ENCODE measurements at regions of chr10 and their contacts with region 1.

Region 1: DNA sequence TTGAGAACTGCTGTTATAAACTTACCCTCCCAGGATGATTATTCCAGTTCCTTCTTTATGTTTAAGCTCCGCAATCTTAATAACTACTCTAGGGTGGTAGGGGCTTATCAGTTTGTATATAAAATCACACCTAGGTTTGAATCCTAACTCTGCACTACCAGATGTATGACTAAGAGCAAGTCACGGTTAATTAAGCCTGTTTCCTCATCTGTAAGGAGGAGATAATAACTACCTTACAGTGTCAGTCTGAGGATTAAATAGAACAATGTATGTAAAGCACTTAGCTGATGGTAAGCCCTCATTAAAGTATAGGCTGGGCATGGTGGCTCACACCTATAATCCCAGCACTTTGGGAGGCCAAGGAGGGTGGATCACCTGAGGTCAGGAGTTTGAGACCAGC is 9.2 kb downstream of the DNA2 start:
- DNase-seq: no peak
- ATAC-seq: no peak
- H3K4me3 ChIP-seq: no peak overlapping the region
- H3K27ac ChIP-seq: no peak overlapping the region
- H3K4me1 ChIP-seq: no peaks in the 10 kb centered on the region
- H3K27me3 ChIP-seq: no peaks in the 10 kb centered on the region
- CTCF ChIP-seq: no peak

Region 2: DNA sequence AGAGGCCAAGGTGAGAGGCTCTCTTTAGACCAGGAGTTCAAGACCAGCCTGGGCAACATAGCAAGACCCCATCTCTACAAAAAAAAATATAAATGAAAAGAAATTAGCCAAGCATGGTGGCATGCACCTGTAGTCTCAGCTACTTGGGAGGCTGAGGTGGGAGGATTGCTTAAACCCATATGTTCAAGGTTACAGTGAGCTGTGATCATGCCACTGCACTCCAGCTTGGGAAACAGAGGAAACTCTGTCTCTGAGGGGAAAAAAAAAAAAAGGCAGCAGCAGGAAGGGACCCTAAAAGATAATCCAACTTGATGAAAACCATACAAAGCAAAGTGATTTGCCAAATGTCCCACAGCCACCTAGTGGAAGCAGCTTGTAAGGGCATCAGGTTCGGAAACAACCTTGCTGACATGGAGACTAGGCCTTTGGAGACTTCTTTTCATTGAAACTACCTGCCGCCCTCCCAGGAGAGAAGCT is 114.2 kb before region 1 on chr10:
- CTCF ChIA-PET with region 1: no interaction called
- POLR2A ChIA-PET with region 1: no interaction called
- in situ Hi-C with region 1: no loop called
- intact Hi-C with region 1: no loop called
- DNase-seq: peak; percentile 58
- ATAC-seq: peak; percentile 70
- H3K4me3 ChIP-seq: no peak overlapping the region
- H3K27ac ChIP-seq: no peak overlapping the region
- H3K4me1 ChIP-seq: no peaks in the 10 kb centered on the region; the same call in 1 of the 2 replicates
- H3K27me3 ChIP-seq: no peaks in the 10 kb centered on the region
- CTCF ChIP-seq: peak; percentile 95

Region 3: DNA sequence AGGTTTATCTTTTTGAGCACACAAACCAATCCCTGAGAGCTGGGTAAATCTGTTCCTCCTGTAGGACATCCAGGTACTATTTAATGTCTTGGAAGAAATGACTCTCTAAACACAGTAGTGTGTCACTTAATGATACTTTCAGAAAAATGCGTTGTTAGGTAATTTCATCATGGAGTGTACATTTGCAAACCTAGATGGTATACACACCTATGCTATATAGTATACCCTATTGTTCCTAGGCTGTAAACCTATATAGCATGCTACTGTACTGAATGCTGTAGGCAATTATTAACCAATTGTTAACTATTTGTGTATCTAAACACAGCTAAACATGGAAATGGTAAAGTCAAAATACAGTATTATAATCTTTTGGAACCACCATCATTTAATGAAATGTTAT is 65.5 kb before region 1 on chr10:
- CTCF ChIA-PET with region 1: no interaction called
- POLR2A ChIA-PET with region 1: no interaction called
- in situ Hi-C with region 1: loop called (anchors 10 kb)
- intact Hi-C with region 1: no loop called
- DNase-seq: no peak
- ATAC-seq: no peak
- H3K4me3 ChIP-seq: no peak overlapping the region
- H3K27ac ChIP-seq: no peak overlapping the region
- H3K4me1 ChIP-seq: no peaks in the 10 kb centered on the region
- H3K27me3 ChIP-seq: no peaks in the 10 kb centered on the region
- CTCF ChIP-seq: no peak

Region 4: GRCh38 chr10:68434657-68435056 is 27.9 kb before region 1 on chr10:
- CTCF ChIA-PET with region 1: no interaction called
- POLR2A ChIA-PET with region 1: no interaction called
- in situ Hi-C with region 1: no loop called
- intact Hi-C with region 1: no loop called
- DNase-seq: no peak
- ATAC-seq: no peak
- H3K4me3 ChIP-seq: no peak overlapping the region
- H3K27ac ChIP-seq: no peak overlapping the region
- H3K4me1 ChIP-seq: no peaks in the 10 kb centered on the region
- H3K27me3 ChIP-seq: no peaks in the 10 kb centered on the region
- CTCF ChIP-seq: no peak

Region 5: GRCh38 chr10:68492118-68492517 is 29.6 kb after region 1 on chr10:
- CTCF ChIA-PET with region 1: no interaction called
- POLR2A ChIA-PET with region 1: interaction called, 11 read pairs
- in situ Hi-C with region 1: no loop called
- intact Hi-C with region 1: no loop called
- DNase-seq: no peak
- ATAC-seq: no peak
- H3K4me3 ChIP-seq: no peak overlapping the region
- H3K27ac ChIP-seq: no peak overlapping the region
- H3K4me1 ChIP-seq: no peaks in the 10 kb centered on the region
- H3K27me3 ChIP-seq: no peaks in the 10 kb centered on the region
- CTCF ChIP-seq: no peak

Measured in Panc1 (cell line).